Cardiac septum (tissue), 1 donor: ENCODE measurements at regions of chr7 and their contacts with region 1.

Region 1: DNA sequence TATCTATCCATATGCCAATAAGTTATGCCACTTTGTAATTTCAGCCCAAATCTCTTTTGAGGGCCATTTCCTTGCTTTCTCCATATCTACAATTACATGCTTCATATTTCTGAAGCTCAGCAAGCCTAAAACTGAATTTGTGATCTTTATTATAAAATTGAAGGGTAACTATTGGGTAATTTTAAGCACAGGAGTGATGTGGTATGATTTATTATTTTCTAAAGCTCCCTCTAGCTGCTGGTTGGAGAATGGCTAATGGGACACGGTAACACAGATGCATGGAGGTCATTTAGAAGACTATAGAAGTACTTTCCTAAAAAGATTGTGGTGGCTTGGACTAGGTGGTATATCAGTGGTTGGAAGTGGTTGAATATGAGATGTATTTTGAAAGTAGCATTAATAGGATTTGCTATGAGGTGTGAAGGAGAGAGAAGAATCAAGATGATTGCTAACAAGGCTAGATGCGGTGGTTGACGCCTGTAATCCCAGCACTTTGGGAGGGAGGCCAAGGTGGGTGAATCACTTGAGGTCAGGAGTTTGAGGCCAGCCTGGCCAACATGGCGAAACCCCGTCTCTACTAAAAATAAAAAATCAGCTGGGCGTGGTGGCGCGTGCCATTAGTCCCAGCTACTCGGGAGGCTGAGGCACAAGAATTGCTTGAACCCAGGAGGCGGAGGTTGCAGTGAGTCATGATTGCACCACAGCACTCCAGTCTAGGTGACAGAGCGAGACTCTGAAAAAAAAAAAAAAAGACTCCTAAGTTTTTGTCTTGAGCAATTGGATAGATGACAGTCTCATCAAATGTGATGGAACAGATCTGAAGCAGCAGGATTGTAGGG is 13.9 kb downstream of the KLHDC10 start:
- DNase-seq: no peak

Region 2: DNA sequence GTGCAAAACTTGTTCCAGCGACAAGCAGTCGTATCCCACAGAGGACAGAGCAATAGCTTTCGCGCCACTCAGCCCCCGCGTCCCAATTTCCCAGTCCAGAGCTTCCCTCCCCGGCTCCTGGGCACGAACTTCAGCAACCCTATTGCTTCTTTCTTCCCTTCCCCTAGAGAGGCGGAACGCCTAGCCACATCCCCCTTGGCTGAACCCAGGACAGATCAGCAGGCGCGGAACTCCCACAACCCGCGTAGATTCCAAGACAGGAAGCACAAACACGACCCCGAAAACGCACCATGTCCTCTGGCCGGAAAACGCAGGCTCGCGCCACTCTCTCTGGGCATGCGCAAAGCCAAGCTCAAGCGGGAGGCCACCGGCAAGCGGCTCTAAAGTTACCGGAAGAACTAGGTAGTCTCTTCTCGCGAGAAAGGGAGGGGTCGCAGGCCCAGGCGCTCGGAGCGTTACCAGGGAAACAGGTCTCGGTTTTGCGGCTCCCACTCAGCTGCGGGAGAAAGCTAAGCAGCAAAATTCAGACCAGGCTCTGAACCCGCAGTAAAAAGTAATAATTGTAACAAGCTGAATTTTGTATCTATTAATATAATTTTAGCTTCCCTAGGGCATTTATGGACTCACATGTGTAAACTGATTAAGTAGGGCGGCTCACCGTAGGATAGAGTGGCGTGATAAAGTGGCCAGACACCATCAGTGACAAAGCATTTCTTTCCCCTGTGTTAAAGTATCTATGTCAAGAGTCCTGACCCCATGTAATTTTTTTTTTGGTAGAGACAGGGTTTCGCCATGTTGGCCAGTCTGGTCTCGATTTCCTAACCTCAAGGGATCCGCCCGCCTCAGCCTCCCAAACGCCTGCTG is 121.1 kb after region 1 on chr7 and contains the start of gene TMEM209:
- intact Hi-C with region 1: loop called (anchors 10 kb)
- DNase-seq: peak; percentile 96
- total RNA-seq, gene TMEM209: 8.5 TPM

Region 3: GRCh38 chr7:130733931-130734814 is 649.9 kb after region 1 on chr7 and contains the start of gene KLF14:
- intact Hi-C with region 1: loop called (anchors 10 kb)
- DNase-seq: no peak
- total RNA-seq, gene KLF14: not detected